CD14-positive monocyte (primary cell): ENCODE measurements at regions of chr1 and their contacts with region 1.

Region 1: GRCh38 chr1:170531758-170532657 is at the start of gene GORAB:
- DNase-seq: peak; percentile 85 to 93 (median 88)
- H3K4me3 ChIP-seq: peak within 1 kb of the TSS; percentile 72 to 93 (median 79)
- H3K4me3 Mint-ChIP-seq: no peak within 1 kb of the TSS
- H3K27ac ChIP-seq: peak within 1 kb of the TSS; percentile 90 to 94
- H3K27ac Mint-ChIP-seq: no peak within 1 kb of the TSS
- H3K4me1 ChIP-seq: peaks cover 15 to 19% of the 10 kb centered on the region in 2 donors
- H3K4me1 Mint-ChIP-seq: peaks cover 10% of the 10 kb centered on the region
- H3K27me3 ChIP-seq: peaks cover 2% of the 10 kb centered on the region in 2 donors
- H3K27me3 Mint-ChIP-seq: peaks cover 0 to 13% (median 3%) of the 10 kb centered on the region in 3 donors
- CTCF ChIP-seq: no peak
- polyA plus RNA-seq, gene GORAB: 0.86 to 17.5 (median 3.3) TPM

Region 2: GRCh38 chr1:170074250-170075157 is 457.5 kb before region 1 on chr1 and contains the start of gene KIFAP3:
- intact Hi-C with region 1: loop called in 1 of 2 experiments (anchors 10 kb)
- DNase-seq: peak; percentile 97 to 98 (median 98)
- H3K4me3 ChIP-seq: peak within 1 kb of the TSS; percentile 55 to 92 (median 70)
- H3K4me3 Mint-ChIP-seq: peak within 1 kb of the TSS; percentile 90 to 92
- H3K27ac ChIP-seq: peak within 1 kb of the TSS; percentile 65 to 89
- H3K27ac Mint-ChIP-seq: peak within 1 kb of the TSS; percentile 88 to 96 (median 93)
- H3K4me1 ChIP-seq: peaks cover 11 to 18% of the 10 kb centered on the region in 2 donors
- H3K4me1 Mint-ChIP-seq: peaks cover 23% of the 10 kb centered on the region
- H3K27me3 ChIP-seq: no peaks in the 10 kb centered on the region
- H3K27me3 Mint-ChIP-seq: peaks cover 0 to 2% (median 0%) of the 10 kb centered on the region in 3 donors
- CTCF ChIP-seq: peak; percentile 57
- polyA plus RNA-seq, gene KIFAP3: 2.1 to 4.7 (median 2.2) TPM

Region 3: GRCh38 chr1:170586321-170587252 is 54.6 kb after region 1 on chr1:
- intact Hi-C with region 1: no loop called
- DNase-seq: no peak
- H3K4me3 ChIP-seq: no peak overlapping the region
- H3K4me3 Mint-ChIP-seq: no peak overlapping the region
- H3K27ac ChIP-seq: no peak overlapping the region
- H3K27ac Mint-ChIP-seq: no peak overlapping the region
- H3K4me1 ChIP-seq: no peaks in the 10 kb centered on the region
- H3K4me1 Mint-ChIP-seq: peaks cover 5% of the 10 kb centered on the region
- H3K27me3 ChIP-seq: peaks cover 5 to 7% of the 10 kb centered on the region in 2 donors
- H3K27me3 Mint-ChIP-seq: peaks cover 2 to 13% (median 7%) of the 10 kb centered on the region in 3 donors
- CTCF ChIP-seq: no peak